Mammary epithelial cell (primary cell): ENCODE measurements at regions of chr5 and their contacts with region 1.

Region 1: GRCh38 chr5:149419859-149420544 is 40.9 kb upstream of the IL17B start:
- DNase-seq: no peak
- H3K4me3 ChIP-seq: no peak overlapping the region
- H3K27ac ChIP-seq: no peak overlapping the region
- H3K4me1 ChIP-seq: no peaks in the 10 kb centered on the region
- H3K27me3 ChIP-seq: no peaks in the 10 kb centered on the region
- CTCF ChIP-seq: no peak

Region 2: DNA sequence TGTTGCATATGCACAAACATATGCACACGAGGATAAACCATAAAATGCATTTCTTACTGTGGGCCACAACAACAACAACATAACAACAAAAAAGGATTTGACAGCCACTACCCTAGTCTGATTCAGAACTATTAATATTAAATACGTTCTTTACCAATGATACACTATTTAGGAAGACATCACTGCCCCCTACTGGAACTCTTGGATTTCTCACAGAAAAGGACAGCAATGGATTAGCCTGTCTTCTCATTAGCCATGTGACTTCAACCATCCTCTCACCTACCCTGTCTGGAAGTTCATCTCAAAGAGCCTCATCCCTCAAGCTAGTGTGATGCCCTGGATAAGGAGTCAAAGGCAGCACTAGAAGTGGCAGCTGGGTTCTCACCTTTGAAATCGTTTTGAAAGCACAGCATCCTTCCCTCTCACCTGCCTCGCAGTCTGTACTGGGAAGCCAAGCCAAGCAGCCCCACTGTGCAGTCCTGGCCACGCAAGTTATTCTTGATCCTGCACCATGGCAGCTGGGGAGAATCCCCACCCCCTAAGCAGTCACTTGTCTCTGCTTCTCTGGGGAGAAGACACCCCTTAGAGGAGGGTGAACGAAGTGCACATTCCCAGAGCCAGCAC is 421.7 kb before region 1 on chr5:
- CTCF ChIA-PET with region 1: no interaction called
- dilution Hi-C with region 1: no loop called
- in situ Hi-C with region 1: no loop called
- intact Hi-C with region 1: no loop called
- DNase-seq: peak; percentile 74
- H3K4me3 ChIP-seq: no peak overlapping the region
- H3K27ac ChIP-seq: no peak overlapping the region
- H3K4me1 ChIP-seq: peaks cover 31% of the 10 kb centered on the region
- H3K27me3 ChIP-seq: no peaks in the 10 kb centered on the region
- CTCF ChIP-seq: peak; percentile 65 to 67

Region 3: GRCh38 chr5:149581192-149581861 is 161.3 kb after region 1 on chr5 and contains the start of gene ARHGEF37:
- CTCF ChIA-PET with region 1: no interaction called
- dilution Hi-C with region 1: no loop called
- in situ Hi-C with region 1: no loop called
- intact Hi-C with region 1: no loop called
- DNase-seq: peak; percentile 77
- H3K4me3 ChIP-seq: peak within 1 kb of the TSS; percentile 37 to 61 (median 52)
- H3K27ac ChIP-seq: peak within 1 kb of the TSS; percentile 81
- H3K4me1 ChIP-seq: peaks cover 15% of the 10 kb centered on the region
- H3K27me3 ChIP-seq: no peaks in the 10 kb centered on the region
- CTCF ChIP-seq: no peak
- total RNA-seq, gene ARHGEF37: 11.0 to 35.2 TPM

Region 4: GRCh38 chr5:149618581-149619251 is 198.7 kb after region 1 on chr5:
- CTCF ChIA-PET with region 1: no interaction called
- dilution Hi-C with region 1: no loop called
- in situ Hi-C with region 1: no loop called
- intact Hi-C with region 1: no loop called
- DNase-seq: peak; percentile 99
- H3K4me3 ChIP-seq: no peak overlapping the region
- H3K27ac ChIP-seq: peak overlapping the region; percentile 82
- H3K4me1 ChIP-seq: peaks cover 24% of the 10 kb centered on the region
- H3K27me3 ChIP-seq: no peaks in the 10 kb centered on the region
- CTCF ChIP-seq: peak; percentile 73 to 75

Region 5: GRCh38 chr5:149822301-149822700 is 402.3 kb after region 1 on chr5:
- CTCF ChIA-PET with region 1: interaction called, 15 read pairs
- dilution Hi-C with region 1: no loop called
- in situ Hi-C with region 1: no loop called
- intact Hi-C with region 1: no loop called
- DNase-seq: no peak
- H3K4me3 ChIP-seq: no peak overlapping the region
- H3K27ac ChIP-seq: no peak overlapping the region
- H3K4me1 ChIP-seq: no peaks in the 10 kb centered on the region
- H3K27me3 ChIP-seq: no peaks in the 10 kb centered on the region
- CTCF ChIP-seq: no peak